Esophagus muscularis mucosa (tissue), 4 donors: ENCODE measurements at regions of chr3 and their contacts with region 1.

Region 1: GRCh38 chr3:128736601-128737000 is 10.6 kb downstream of the RAB7A start:
- DNase-seq: no peak
- H3K4me3 ChIP-seq: no peak overlapping the region
- H3K27ac ChIP-seq: no peak overlapping the region
- H3K4me1 ChIP-seq: peaks cover 44 to 88% (median 77%) of the 10 kb centered on the region in 4 donors
- H3K27me3 ChIP-seq: no peaks in the 10 kb centered on the region
- CTCF ChIP-seq: no peak
- EP300 ChIP-seq: no peak
- POLR2A ChIP-seq: no peak

Region 2: DNA sequence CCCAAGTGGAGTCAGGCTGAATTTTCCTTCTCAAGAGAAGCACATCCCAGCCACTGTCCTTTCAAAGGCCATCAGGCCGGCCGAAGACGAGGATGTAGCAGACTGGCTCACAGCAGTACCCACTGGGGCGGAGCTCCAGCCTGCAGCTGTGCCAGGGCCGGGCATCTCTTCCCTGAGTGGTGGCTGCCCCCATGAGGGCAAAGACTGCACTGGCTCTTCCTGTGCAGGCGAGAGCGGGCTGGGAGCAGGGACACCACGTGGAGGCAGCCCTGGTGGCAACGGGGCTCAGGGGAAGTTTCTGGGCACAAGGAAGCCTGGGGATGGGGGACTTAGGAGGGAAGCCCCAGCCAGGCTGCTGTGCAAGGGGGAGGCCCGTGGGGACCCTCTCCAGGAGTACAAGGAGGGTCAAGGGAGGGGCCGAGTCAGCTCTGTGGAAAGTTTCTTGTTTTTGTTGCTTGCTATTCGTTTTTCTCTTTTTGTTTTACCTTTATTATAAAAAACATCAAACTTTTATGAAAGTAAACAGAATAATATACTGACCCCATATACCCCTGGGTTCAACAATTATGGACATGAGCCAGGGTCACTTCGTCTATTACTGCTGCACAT is 152.1 kb before region 1 on chr3:
- intact Hi-C with region 1: no loop called
- DNase-seq: no peak
- H3K4me3 ChIP-seq: no peak overlapping the region
- H3K27ac ChIP-seq: no peak overlapping the region
- H3K4me1 ChIP-seq: peaks cover 0 to 7% (median 0%) of the 10 kb centered on the region in 4 donors
- H3K27me3 ChIP-seq: peaks cover 0 to 11% (median 0%) of the 10 kb centered on the region in 4 donors
- CTCF ChIP-seq: peak; percentile 23 to 55 (median 54)
- EP300 ChIP-seq: no peak
- POLR2A ChIP-seq: no peak

Region 3: DNA sequence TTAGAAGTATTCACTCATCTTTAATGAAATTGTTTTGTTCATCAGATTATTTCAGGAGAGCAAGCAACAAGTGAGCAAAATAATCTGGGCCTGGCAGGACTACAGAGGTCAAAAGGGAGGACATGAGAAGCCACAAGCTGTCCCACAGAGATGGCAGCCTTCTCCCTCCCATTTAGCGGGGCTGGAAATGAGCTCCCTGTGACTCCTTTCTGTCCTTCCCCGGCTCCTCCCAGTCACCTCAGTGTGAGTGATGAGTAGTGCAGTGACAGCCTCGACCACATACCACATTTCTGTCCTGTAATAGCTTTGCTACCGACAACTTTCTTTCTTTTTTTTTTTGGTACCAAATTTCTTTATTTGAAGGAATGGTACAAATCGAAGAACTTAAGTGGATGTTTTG is 27.4 kb after region 1 on chr3:
- intact Hi-C with region 1: no loop called
- DNase-seq: no peak
- H3K4me3 ChIP-seq: no peak overlapping the region
- H3K27ac ChIP-seq: no peak overlapping the region
- H3K4me1 ChIP-seq: peaks cover 46 to 65% (median 58%) of the 10 kb centered on the region in 4 donors
- H3K27me3 ChIP-seq: no peaks in the 10 kb centered on the region
- CTCF ChIP-seq: no peak
- EP300 ChIP-seq: no peak
- POLR2A ChIP-seq: no peak

Region 4: DNA sequence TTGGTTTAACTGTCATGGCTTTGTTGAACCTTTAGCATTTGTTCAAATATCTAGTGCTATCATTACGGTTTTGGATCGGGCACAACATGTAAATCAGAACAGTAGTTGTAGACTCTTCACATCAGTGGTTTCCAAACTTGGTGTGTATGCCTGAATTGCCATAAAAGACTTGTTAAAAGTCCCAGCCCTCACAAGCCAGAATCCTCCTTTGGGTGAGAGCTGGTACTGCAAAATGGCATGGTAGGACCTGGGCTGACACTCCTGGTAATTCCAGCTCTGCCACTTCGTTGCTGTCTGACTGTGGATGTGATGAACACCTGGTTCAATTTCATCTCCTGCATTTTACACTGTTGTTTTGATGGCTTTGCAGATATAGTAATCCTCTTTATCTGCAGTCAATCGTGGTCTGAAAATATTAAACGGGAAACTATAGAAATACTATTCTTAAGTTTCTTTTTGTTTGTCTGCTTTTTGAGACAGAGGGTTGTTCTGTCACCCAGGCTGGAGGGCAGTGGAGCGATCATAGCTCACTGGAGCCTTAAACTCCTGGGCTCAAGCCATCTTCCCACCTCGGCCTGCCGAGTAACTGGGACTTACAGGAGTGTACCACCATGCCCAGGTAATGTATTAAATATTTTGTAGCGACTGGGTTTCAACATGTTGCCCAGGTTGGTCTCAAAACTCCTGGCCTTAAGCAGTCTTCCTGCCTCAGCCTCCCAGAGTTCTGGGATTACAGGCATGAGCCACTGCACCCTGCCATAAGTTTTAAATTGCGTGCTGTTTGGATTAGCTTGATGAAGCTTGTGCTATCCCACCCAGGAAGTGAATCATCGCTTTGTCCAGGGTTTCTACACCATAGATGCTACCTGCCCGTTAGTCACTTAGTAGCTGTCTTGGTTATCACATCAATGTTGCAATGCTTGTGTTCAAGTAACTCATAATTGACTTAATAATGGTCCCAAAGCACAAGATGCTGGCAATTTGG is 50.9 kb after region 1 on chr3:
- intact Hi-C with region 1: loop called (anchors 5 kb)
- DNase-seq: no peak
- H3K4me3 ChIP-seq: no peak overlapping the region
- H3K27ac ChIP-seq: no peak overlapping the region
- H3K4me1 ChIP-seq: peaks cover 62 to 96% (median 84%) of the 10 kb centered on the region in 4 donors
- H3K27me3 ChIP-seq: no peaks in the 10 kb centered on the region
- CTCF ChIP-seq: peak in 2 of 3 experiments; percentile 20 to 44
- EP300 ChIP-seq: no peak
- POLR2A ChIP-seq: no peak